CD8-positive, alpha-beta T cell (primary cell): ENCODE measurements at regions of chr2 and their contacts with region 1.

Region 1: DNA sequence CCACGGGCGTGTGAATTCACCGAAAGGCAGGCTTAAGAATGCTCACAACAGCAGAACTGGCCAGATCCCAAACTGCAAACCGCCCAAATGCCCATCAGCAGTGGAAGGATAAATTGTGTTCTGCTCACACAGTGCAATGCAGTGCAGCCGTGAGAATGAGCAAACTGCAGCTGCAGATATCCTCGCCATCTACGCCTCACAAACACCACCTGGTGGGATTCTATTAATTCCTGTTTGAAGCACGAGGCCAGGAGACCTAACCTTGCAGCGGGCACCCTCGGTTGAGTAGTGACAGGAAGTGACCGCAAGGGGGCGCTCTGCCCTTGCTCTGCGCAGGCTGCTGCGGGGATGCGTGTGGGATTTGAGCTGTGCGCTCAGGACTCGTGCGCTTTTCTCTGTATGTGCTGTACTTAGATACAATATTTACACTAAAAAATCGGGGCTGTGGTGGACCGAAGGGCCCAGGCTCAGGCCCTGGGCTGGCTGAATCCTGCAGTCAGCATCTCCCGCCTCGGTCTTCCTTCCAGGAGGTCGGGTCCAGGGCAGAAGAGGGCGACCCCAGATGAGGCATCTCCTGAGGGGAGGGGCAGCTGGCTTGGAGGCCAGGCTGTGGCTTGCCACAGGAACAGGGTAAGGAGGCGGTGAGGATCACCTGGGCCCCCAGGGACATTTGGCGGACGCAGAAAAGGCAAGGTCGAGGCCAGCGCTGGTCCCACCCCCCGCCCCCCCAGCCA is 19.8 kb upstream of the PDIA6 start:
- DNase-seq: peak; percentile 62 to 88 (median 81)
- ATAC-seq: peak; percentile 95
- H3K4me3 ChIP-seq: no peak overlapping the region
- H3K4me3 Mint-ChIP-seq: peak overlapping the region; percentile 15
- H3K27ac ChIP-seq: no peak overlapping the region
- H3K27ac Mint-ChIP-seq: no peak overlapping the region
- H3K4me1 ChIP-seq: peaks cover 5% of the 10 kb centered on the region
- H3K4me1 Mint-ChIP-seq: peaks cover 6% of the 10 kb centered on the region
- H3K27me3 ChIP-seq: peaks cover 4% of the 10 kb centered on the region in 2 experiments
- H3K27me3 Mint-ChIP-seq: peaks cover 23% of the 10 kb centered on the region
- CTCF ChIP-seq: peak; percentile 98

Region 2: GRCh38 chr2:10254373-10255151 is 577.8 kb before region 1 on chr2:
- CTCF ChIA-PET with region 1: no interaction called
- POLR2A ChIA-PET with region 1: no interaction called
- intact Hi-C with region 1: no loop called
- DNase-seq: peak in 1 of 9 experiments; percentile 11
- ATAC-seq: no peak
- H3K4me3 ChIP-seq: no peak overlapping the region
- H3K4me3 Mint-ChIP-seq: no peak overlapping the region
- H3K27ac ChIP-seq: no peak overlapping the region
- H3K27ac Mint-ChIP-seq: no peak overlapping the region
- H3K4me1 ChIP-seq: no peaks in the 10 kb centered on the region
- H3K4me1 Mint-ChIP-seq: no peaks in the 10 kb centered on the region
- H3K27me3 ChIP-seq: no peaks in the 10 kb centered on the region
- H3K27me3 Mint-ChIP-seq: peaks cover 4% of the 10 kb centered on the region
- CTCF ChIP-seq: no peak

Region 3: DNA sequence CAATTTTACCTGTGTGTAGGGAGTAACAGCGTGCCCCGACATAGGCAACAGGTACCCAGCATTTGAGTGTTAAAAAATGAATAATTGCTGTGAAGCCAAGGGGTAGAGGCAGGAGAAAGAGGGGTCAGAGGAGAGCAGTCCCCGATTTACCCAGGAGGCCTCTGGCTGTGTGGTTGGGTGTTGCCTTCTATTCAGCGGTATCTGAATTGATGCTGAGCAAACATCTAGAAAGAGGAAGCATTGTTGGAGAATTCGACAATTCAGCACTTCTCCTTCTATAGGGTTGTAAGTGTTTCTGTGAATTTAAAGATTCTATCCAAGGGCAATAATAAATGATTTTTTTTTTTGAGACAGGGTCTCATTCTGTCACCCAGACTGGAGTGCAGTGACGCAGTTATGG is 11.1 kb before region 1 on chr2:
- CTCF ChIA-PET with region 1: interaction called, 29 read pairs
- POLR2A ChIA-PET with region 1: no interaction called
- intact Hi-C with region 1: no loop called
- DNase-seq: no peak
- ATAC-seq: no peak
- H3K4me3 ChIP-seq: no peak overlapping the region
- H3K4me3 Mint-ChIP-seq: no peak overlapping the region
- H3K27ac ChIP-seq: no peak overlapping the region
- H3K27ac Mint-ChIP-seq: no peak overlapping the region
- H3K4me1 ChIP-seq: no peaks in the 10 kb centered on the region
- H3K4me1 Mint-ChIP-seq: no peaks in the 10 kb centered on the region
- H3K27me3 ChIP-seq: no peaks in the 10 kb centered on the region
- H3K27me3 Mint-ChIP-seq: peaks cover 35% of the 10 kb centered on the region
- CTCF ChIP-seq: no peak

Region 4: GRCh38 chr2:10846110-10846861 is 13.9 kb after region 1 on chr2:
- CTCF ChIA-PET with region 1: interaction called, 18 read pairs
- POLR2A ChIA-PET with region 1: no interaction called
- intact Hi-C with region 1: no loop called
- DNase-seq: no peak
- ATAC-seq: no peak
- H3K4me3 ChIP-seq: no peak overlapping the region
- H3K4me3 Mint-ChIP-seq: no peak overlapping the region
- H3K27ac ChIP-seq: no peak overlapping the region
- H3K27ac Mint-ChIP-seq: no peak overlapping the region
- H3K4me1 ChIP-seq: no peaks in the 10 kb centered on the region
- H3K4me1 Mint-ChIP-seq: no peaks in the 10 kb centered on the region
- H3K27me3 ChIP-seq: peaks cover 0 to 3% of the 10 kb centered on the region in 2 experiments
- H3K27me3 Mint-ChIP-seq: peaks cover 10% of the 10 kb centered on the region
- CTCF ChIP-seq: no peak

Region 5: GRCh38 chr2:10920764-10921388 is 88.5 kb after region 1 on chr2:
- CTCF ChIA-PET with region 1: no interaction called
- POLR2A ChIA-PET with region 1: no interaction called
- intact Hi-C with region 1: no loop called
- DNase-seq: no peak
- ATAC-seq: no peak
- H3K4me3 ChIP-seq: no peak overlapping the region
- H3K4me3 Mint-ChIP-seq: no peak overlapping the region
- H3K27ac ChIP-seq: no peak overlapping the region
- H3K27ac Mint-ChIP-seq: no peak overlapping the region
- H3K4me1 ChIP-seq: no peaks in the 10 kb centered on the region
- H3K4me1 Mint-ChIP-seq: no peaks in the 10 kb centered on the region
- H3K27me3 ChIP-seq: no peaks in the 10 kb centered on the region
- H3K27me3 Mint-ChIP-seq: peaks cover 7% of the 10 kb centered on the region
- CTCF ChIP-seq: no peak

Region 6: GRCh38 chr2:11124503-11125068 is 292.2 kb after region 1 on chr2:
- CTCF ChIA-PET with region 1: interaction called, 119 read pairs
- POLR2A ChIA-PET with region 1: no interaction called
- intact Hi-C with region 1: no loop called
- DNase-seq: peak in 8 of 9 experiments; percentile 22 to 66 (median 42)
- ATAC-seq: peak; percentile 74
- H3K4me3 ChIP-seq: no peak overlapping the region
- H3K4me3 Mint-ChIP-seq: no peak overlapping the region
- H3K27ac ChIP-seq: no peak overlapping the region
- H3K27ac Mint-ChIP-seq: no peak overlapping the region
- H3K4me1 ChIP-seq: no peaks in the 10 kb centered on the region
- H3K4me1 Mint-ChIP-seq: peaks cover 17% of the 10 kb centered on the region
- H3K27me3 ChIP-seq: no peaks in the 10 kb centered on the region
- H3K27me3 Mint-ChIP-seq: no peaks in the 10 kb centered on the region
- CTCF ChIP-seq: peak; percentile 35

Region 7: GRCh38 chr2:11446733-11447248 is 614.4 kb after region 1 on chr2:
- CTCF ChIA-PET with region 1: interaction called, 9 read pairs
- POLR2A ChIA-PET with region 1: no interaction called
- intact Hi-C with region 1: loop called in 1 of 2 experiments (anchors 1 kb)
- DNase-seq: peak; percentile 10 to 72 (median 50)
- ATAC-seq: peak; percentile 73
- H3K4me3 ChIP-seq: no peak overlapping the region
- H3K4me3 Mint-ChIP-seq: no peak overlapping the region
- H3K27ac ChIP-seq: no peak overlapping the region
- H3K27ac Mint-ChIP-seq: no peak overlapping the region
- H3K4me1 ChIP-seq: no peaks in the 10 kb centered on the region
- H3K4me1 Mint-ChIP-seq: no peaks in the 10 kb centered on the region
- H3K27me3 ChIP-seq: no peaks in the 10 kb centered on the region
- H3K27me3 Mint-ChIP-seq: no peaks in the 10 kb centered on the region
- CTCF ChIP-seq: peak; percentile 75

Region 8: GRCh38 chr2:11583840-11584524 is 751.6 kb after region 1 on chr2:
- CTCF ChIA-PET with region 1: interaction called, 6 read pairs
- POLR2A ChIA-PET with region 1: no interaction called
- intact Hi-C with region 1: loop called in 1 of 2 experiments (anchors 2 kb)
- DNase-seq: peak; percentile 16 to 65 (median 53)
- ATAC-seq: peak; percentile 94
- H3K4me3 ChIP-seq: no peak overlapping the region
- H3K4me3 Mint-ChIP-seq: no peak overlapping the region
- H3K27ac ChIP-seq: no peak overlapping the region
- H3K27ac Mint-ChIP-seq: no peak overlapping the region
- H3K4me1 ChIP-seq: no peaks in the 10 kb centered on the region
- H3K4me1 Mint-ChIP-seq: peaks cover 3% of the 10 kb centered on the region
- H3K27me3 ChIP-seq: no peaks in the 10 kb centered on the region
- H3K27me3 Mint-ChIP-seq: peaks cover 11% of the 10 kb centered on the region
- CTCF ChIP-seq: peak; percentile 53